Activated T-helper 1 cell treated with anti-CD3 and anti-CD28 coated beads, Interleukin-12 subunit alpha, Interleukin-12 subunit beta, Interleukin-2, Interleukin-4 antibody, amounts not matched to agents 30 ng/mL and 10 ng/mL and 1 ng/mL, durations not matched to agents 14 hours and 24 hours and 36 hours (primary cell): ENCODE measurements at regions of chr2 and their contacts with region 1.

Region 1: GRCh38 chr2:9656270-9656766 is 25.5 kb upstream of the YWHAQ start:
- DNase-seq: peak; percentile 71
- H3K4me3 Mint-ChIP-seq: peak overlapping the region; percentile 35
- H3K27ac Mint-ChIP-seq: peak overlapping the region; percentile 91
- H3K4me1 Mint-ChIP-seq: peaks cover 48% of the 10 kb centered on the region
- H3K27me3 Mint-ChIP-seq: peaks cover 3% of the 10 kb centered on the region

Region 2: DNA sequence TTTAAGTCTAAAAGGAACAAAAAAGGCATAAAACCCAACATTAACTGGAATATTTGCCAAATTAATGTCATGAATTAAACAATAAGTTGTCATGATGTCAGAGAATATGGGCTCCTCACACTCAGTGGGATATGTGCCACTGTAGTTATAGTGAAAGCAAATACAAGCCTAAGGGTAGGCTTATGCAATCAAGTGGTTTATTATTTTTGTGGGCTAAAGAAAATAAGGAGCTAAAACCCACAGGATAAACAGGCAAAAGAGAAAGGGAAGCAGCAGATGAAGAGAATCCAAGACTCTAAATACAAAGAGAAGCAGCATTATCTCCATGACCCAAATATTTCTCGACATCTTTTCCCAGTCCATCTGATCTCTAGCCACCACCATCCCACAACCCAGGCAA is 43.0 kb before region 1 on chr2:
- intact Hi-C with region 1: loop called (anchors 1 kb)
- DNase-seq: no peak
- H3K4me3 Mint-ChIP-seq: no peak overlapping the region
- H3K27ac Mint-ChIP-seq: no peak overlapping the region
- H3K4me1 Mint-ChIP-seq: peaks cover 92% of the 10 kb centered on the region
- H3K27me3 Mint-ChIP-seq: no peaks in the 10 kb centered on the region

Region 3: GRCh38 chr2:9681427-9681817 is 25.1 kb after region 1 on chr2:
- intact Hi-C with region 1: loop called (anchors 2 kb)
- DNase-seq: peak; percentile 38
- H3K4me3 Mint-ChIP-seq: no peak overlapping the region
- H3K27ac Mint-ChIP-seq: peak overlapping the region; percentile 52
- H3K4me1 Mint-ChIP-seq: peaks cover 17% of the 10 kb centered on the region
- H3K27me3 Mint-ChIP-seq: peaks cover 2% of the 10 kb centered on the region

Region 4: GRCh38 chr2:9708683-9709538 is 52.6 kb after region 1 on chr2:
- intact Hi-C with region 1: loop called (anchors 1 kb)
- DNase-seq: no peak
- H3K4me3 Mint-ChIP-seq: no peak overlapping the region
- H3K27ac Mint-ChIP-seq: peak overlapping the region; percentile 86
- H3K4me1 Mint-ChIP-seq: peaks cover 58% of the 10 kb centered on the region
- H3K27me3 Mint-ChIP-seq: no peaks in the 10 kb centered on the region

Region 5: DNA sequence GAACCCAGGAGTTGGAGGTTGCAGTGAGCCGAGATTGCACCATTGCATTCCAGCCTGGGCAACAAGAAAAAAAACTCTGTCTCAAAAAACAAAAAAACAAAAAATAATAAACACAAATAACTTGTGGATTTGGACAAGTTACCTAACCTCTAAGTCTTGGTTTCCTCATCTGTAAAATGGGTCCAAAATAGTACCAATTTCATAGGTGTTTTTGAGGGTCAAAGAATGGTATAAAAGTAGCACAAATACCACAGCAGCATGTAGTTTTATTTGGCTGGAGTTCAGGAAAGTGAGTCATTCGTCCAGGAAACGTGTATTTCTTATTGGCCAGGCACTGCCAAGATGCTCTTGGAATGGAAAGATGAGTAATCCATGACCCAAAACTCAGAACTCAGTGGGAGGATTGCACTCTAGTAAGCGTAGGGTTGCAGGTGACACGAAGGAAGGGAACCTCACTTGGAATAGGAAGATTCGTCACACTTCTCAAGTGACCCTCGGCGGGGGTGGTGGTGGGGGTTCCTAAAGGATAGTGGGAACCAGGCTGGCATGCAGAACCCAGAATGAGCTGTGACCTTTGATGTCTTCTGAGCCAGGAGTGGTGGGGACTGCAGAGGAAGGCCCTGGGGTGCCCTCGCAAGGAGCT is 319.6 kb after region 1 on chr2:
- intact Hi-C with region 1: loop called (anchors 10 kb)
- DNase-seq: no peak
- H3K4me3 Mint-ChIP-seq: no peak overlapping the region
- H3K27ac Mint-ChIP-seq: peak overlapping the region; percentile 4
- H3K4me1 Mint-ChIP-seq: peaks cover 72% of the 10 kb centered on the region
- H3K27me3 Mint-ChIP-seq: peaks cover 4% of the 10 kb centered on the region